HEK293 (cell line): ENCODE measurements at regions of chr1 and their contacts with region 1.

Region 1: DNA sequence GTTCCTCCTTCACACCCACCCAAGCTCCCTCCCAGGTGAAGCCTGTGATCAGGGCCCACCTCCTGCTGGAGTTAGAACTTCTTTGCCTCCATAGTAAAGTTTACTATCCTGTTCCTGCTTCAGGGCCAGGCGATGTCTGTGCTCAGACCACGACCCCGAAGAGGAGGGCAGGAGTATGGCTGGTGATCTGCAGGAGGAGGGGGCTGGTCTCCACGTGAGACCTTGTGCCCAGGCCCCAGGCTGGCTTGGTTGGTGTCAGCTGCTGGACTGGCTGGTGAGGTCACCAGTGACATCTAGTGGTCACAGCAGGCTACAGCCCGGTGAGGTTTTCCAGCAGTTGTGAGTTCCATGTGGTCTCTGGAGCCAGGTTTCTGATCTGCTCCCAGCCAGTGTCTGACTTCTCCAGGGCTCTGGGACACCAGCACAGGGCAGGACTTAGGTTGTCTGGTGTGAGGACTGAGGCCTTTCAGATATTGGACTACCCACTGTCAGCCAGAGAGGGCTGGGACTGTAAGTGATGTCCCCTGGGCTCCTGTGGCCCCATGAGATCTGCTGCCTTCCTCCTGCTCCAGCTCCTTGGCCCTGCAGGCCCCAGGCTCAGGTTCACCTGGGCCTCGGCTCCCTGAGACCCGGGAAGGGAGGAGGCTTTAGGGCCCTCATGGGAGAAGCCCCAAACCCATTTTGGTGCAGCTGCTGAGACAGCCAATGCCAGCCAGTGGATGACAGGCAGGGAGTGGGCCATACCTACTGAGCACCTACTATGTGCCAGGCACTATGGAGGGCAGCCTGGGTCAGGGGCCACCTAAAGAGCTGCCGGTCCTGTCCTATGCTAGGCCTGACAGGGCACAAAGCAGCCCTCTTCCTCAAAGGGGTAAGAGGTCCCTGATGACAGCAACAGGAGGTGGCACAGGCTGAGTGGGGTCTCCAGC is 6.0 kb upstream of the UBL4B start:
- H3K4me3 ChIP-seq: no peak overlapping the region
- H3K27ac ChIP-seq: no peak overlapping the region
- H3K4me1 ChIP-seq: no peaks in the 10 kb centered on the region
- CTCF ChIP-seq: peak; percentile 87

Region 2: GRCh38 chr1:110118636-110119615 is 12.6 kb after region 1 on chr1:
- CTCF ChIA-PET with region 1: interaction called, 41 read pairs
- POLR2A ChIA-PET with region 1: interaction called, 3 read pairs
- H3K4me3 ChIP-seq: no peak overlapping the region
- H3K27ac ChIP-seq: no peak overlapping the region
- H3K4me1 ChIP-seq: no peaks in the 10 kb centered on the region
- CTCF ChIP-seq: no peak

Region 3: GRCh38 chr1:110155878-110156522 is 49.7 kb after region 1 on chr1:
- CTCF ChIA-PET with region 1: no interaction called
- POLR2A ChIA-PET with region 1: no interaction called
- H3K4me3 ChIP-seq: no peak overlapping the region
- H3K27ac ChIP-seq: no peak overlapping the region
- H3K4me1 ChIP-seq: no peaks in the 10 kb centered on the region
- CTCF ChIP-seq: no peak